Activated naive CD8-positive, alpha-beta T cell treated with anti-CD3 and anti-CD28 coated beads, Interleukin-2, amount 10 ng/mL, durations not matched to agents 7 days and 5 days (primary cell): ENCODE measurements at regions of chr15 and their contacts with region 1.

Region 1: GRCh38 chr15:64162870-64163658 is at the start of gene PPIB:
- DNase-seq: peak; percentile 97
- ATAC-seq: peak; percentile 96
- H3K4me3 Mint-ChIP-seq: peak within 1 kb of the TSS; percentile 93
- H3K27ac Mint-ChIP-seq: peak within 1 kb of the TSS; percentile 97
- H3K4me1 Mint-ChIP-seq: peaks cover 31% of the 10 kb centered on the region
- H3K27me3 Mint-ChIP-seq: no peaks in the 10 kb centered on the region
- total RNA-seq, gene PPIB: 225 to 227 TPM

Region 2: DNA sequence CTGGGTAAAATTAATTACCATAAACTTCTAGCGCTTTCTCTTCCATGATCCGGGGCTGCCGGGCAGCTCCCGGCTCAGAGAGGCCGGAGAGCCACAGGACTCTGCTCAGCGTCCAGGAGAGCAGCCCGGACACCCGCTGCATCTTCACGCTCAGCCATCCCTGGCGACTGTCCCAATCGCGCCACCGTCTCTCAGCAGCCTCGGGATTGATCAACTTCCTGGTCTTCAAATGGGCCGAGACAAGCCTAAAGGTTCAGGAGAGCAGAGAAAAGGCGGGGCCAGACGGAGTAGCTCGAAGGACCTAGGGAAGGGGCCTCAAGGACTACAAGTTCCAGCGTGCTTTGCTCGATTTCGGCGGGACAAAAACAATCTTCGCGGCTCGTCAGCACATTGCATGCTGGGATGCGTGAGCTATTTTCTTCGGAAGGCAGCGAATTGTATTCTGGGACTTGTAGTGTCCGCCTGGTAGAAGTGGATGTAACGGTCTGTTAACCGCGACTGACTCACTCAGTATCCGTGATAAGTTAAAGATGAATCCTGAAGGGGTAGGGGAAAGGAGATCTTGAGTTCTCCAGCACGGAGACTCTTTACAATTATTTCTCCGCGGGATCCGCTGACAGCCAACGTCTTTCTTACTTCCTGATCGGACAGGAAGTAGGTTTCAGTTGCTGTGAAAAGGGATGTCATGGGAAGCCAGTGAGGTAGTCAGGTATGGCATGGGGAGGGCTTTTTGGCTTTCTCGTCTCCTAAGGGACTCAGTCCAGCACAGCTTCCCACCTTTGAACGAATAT is 69.2 kb before region 1 on chr15 and contains the start of gene CIAO2A:
- POLR2A ChIA-PET with region 1: interaction called, 19 read pairs
- DNase-seq: peak; percentile 82
- ATAC-seq: peak; percentile 79
- H3K4me3 Mint-ChIP-seq: peak within 1 kb of the TSS; percentile 90
- H3K27ac Mint-ChIP-seq: peak within 1 kb of the TSS; percentile 99
- H3K4me1 Mint-ChIP-seq: peaks cover 47% of the 10 kb centered on the region
- H3K27me3 Mint-ChIP-seq: no peaks in the 10 kb centered on the region
- total RNA-seq, gene CIAO2A: 57.6 to 61.5 TPM

Region 3: DNA sequence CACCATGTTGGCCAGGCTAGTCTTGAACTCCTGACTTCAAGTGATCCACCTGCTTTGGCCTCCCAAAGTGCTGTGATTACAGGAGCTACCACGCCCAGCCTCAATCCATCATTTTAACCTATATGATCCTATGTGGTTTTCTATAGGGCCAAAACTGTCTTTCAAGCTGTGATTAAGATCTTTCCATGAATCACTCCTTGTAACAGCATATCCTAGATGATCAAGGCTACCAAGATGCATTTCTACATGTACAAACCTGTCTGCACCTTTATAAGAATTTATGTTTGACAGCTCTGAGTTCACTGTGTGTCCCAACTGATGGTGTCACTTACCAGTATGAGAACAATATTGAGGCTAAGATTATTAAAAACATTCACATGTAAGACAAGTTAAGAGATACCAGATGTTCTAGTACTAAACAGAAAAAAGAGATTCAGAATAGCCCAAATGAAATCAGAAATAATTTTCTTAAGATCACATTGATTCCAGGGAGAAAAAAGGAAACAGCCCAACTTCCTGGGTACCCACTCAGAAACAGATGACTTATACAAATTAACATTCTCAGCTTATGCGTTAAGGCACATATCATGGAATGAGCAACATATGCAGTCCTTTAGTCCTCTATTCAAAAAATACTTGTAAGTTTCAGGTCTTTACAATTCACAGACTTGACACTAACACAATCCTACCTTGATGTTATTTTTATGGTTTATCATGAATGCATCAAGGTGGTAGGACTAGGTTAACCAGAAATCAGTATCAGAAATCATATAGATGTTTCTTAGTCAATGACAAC is 24.5 kb after region 1 on chr15:
- POLR2A ChIA-PET with region 1: no interaction called
- DNase-seq: no peak
- ATAC-seq: no peak
- H3K4me3 Mint-ChIP-seq: no peak overlapping the region
- H3K27ac Mint-ChIP-seq: no peak overlapping the region
- H3K4me1 Mint-ChIP-seq: peaks cover 2% of the 10 kb centered on the region
- H3K27me3 Mint-ChIP-seq: no peaks in the 10 kb centered on the region

Region 4: DNA sequence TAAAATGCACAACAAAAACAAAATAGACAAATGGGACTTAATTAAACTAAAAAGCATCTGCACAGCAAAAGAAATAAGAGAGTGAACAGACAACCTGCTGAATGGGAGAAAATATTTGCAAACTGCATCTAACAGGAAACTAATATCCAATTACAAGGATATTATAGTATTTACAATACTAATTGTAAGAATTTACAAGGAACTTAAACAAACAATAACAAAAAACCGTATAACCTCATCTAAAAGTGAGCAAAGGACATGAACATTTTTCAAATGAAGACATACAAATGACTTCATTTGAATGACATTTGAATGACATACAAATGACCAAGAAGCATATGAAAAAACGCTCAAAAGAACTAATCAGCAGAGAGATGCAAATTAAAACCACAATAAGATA is 126.5 kb after region 1 on chr15:
- POLR2A ChIA-PET with region 1: no interaction called
- DNase-seq: no peak
- ATAC-seq: no peak
- H3K4me3 Mint-ChIP-seq: no peak overlapping the region
- H3K27ac Mint-ChIP-seq: no peak overlapping the region
- H3K4me1 Mint-ChIP-seq: peaks cover 5% of the 10 kb centered on the region
- H3K27me3 Mint-ChIP-seq: no peaks in the 10 kb centered on the region

Region 5: GRCh38 chr15:64387562-64388168 is 224.6 kb after region 1 on chr15 and contains the start of gene TRIP4:
- POLR2A ChIA-PET with region 1: interaction called, 16 read pairs
- DNase-seq: peak; percentile 94
- ATAC-seq: peak; percentile 100
- H3K4me3 Mint-ChIP-seq: peak within 1 kb of the TSS; percentile 95
- H3K27ac Mint-ChIP-seq: peak within 1 kb of the TSS; percentile 93
- H3K4me1 Mint-ChIP-seq: peaks cover 11% of the 10 kb centered on the region
- H3K27me3 Mint-ChIP-seq: no peaks in the 10 kb centered on the region
- total RNA-seq, gene TRIP4: 23.7 to 25.7 TPM